ENCODE measurements at regions of chr16 and their contacts with region 1.

Region 1: DNA sequence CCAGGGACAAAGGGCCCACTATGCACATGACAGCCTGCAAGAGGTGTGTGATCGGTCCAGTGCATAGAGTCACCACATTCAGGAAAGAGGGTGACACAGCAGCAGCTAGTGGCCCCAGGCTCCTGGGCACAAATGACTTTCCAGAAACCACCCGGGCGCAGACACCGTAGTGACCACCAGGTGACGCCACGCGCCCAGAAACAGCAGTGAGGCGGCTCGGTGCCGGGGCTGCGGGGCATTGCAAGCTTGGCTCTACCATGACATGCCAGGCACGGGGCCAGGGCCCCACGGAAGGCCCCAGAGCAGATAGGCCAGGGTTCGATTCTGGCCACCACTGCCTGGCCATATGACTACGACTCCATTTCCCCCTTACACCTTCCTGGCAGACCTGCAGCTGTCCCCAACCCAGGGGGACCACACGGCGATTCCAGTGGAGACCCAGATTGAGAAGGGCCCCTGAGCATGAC is 6.7 kb downstream of the RHBDF1 start:
- DNase-seq: peak; percentile 90
- H3K4me3 Mint-ChIP-seq: no peak overlapping the region
- H3K27ac Mint-ChIP-seq: no peak overlapping the region
- H3K4me1 Mint-ChIP-seq: no peaks in the 10 kb centered on the region
- H3K27me3 Mint-ChIP-seq: peaks cover 54% of the 10 kb centered on the region

Region 2: DNA sequence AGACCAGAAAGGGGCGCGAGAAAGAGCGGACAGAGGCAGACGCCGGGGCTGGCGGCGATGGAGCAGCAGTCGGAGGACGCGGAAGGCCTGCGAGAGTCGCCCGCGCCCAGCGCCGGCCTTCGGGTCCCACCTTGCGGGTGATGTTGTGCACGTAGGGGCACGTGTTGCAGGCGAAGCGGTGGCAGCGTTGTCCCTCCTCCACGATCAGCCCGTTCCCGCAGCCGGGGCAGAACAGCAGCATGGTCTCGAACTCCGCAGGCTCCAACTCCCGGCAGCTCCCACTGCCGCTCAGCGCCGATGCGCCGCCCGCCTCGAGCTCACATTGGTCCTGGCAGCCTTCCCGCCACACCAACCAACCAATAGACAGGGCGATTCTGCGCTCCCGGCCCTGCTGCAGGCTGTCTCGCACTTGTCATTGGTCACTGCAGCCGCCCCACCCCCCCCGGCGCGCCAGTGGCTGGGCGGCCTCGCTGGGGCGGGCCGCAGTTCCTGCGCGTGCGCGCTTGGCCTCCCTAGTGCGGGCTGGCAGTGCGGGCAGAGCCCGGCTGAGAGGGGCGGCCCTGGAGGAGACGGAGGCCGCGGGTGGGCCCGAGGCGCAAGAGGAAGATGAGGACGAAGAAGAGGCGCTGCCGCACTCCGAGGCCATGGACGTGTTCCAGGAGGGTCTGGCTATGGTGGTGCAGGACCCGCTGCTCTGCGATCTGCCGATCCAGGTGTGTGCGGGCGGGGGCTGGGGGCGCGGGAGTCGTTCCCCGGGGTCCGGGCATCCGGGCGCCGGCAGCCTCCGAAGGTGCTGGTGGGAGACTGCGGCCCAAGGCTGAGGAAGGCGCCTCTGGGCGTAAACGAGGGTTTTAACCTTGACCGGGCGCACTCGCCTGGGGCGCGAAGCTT is 12.1 kb before region 1 on chr16 and contains the starts of genes POLR3K and SNRNP25:
- CTCF ChIA-PET with region 1: interaction called, 11 read pairs
- DNase-seq: peak; percentile 99
- H3K4me3 Mint-ChIP-seq: peak within 1 kb of the TSS; percentile 92
- H3K27ac Mint-ChIP-seq: peak within 1 kb of the TSS; percentile 88
- H3K4me1 Mint-ChIP-seq: peaks cover 38% of the 10 kb centered on the region
- H3K27me3 Mint-ChIP-seq: no peaks in the 10 kb centered on the region

Region 3: GRCh38 chr16:77807-78443 is 12.2 kb after region 1 on chr16 and contains the start of gene MPG:
- CTCF ChIA-PET with region 1: interaction called, 31 read pairs
- DNase-seq: peak; percentile 89
- H3K4me3 Mint-ChIP-seq: peak within 1 kb of the TSS; percentile 85
- H3K27ac Mint-ChIP-seq: peak within 1 kb of the TSS; percentile 70
- H3K4me1 Mint-ChIP-seq: peaks cover 34% of the 10 kb centered on the region
- H3K27me3 Mint-ChIP-seq: peaks cover 41% of the 10 kb centered on the region

Region 4: DNA sequence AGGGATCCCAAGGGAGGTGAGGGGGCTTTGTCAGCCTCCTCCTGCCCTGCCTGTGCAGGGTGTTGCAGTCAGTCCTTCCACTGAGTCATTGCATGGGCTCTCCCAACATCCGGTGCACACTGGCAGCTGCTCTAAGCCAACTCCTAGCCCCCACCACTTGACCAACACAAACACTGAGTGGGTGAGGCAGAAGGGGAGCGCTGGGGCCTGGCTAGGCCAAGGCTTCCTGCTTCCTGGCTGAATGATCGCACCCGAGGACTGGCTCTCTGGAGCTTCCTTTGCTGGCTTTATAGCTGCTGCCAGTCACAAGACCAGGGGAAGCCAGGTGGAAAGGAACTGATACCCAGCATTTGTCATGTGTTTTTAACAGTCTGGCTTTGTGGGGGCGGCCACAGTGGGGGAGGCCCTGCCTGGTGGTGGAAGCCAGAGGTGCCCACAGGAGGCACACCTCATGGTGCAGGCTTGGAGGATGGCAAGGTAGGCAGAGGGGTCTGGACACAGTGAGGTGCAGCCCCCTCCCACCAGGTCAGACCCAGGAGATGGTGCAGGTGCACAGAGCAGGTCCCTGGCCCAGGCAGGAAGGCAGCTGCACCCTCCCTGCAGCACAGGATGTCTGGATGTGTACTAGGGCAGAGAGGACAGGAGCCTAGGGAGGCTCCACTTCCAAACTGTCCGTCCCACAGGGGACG is 19.2 kb after region 1 on chr16:
- CTCF ChIA-PET with region 1: interaction called, 467 read pairs
- DNase-seq: peak; percentile 62
- H3K4me3 Mint-ChIP-seq: no peak overlapping the region
- H3K27ac Mint-ChIP-seq: peak overlapping the region; percentile 61
- H3K4me1 Mint-ChIP-seq: peaks cover 30% of the 10 kb centered on the region
- H3K27me3 Mint-ChIP-seq: no peaks in the 10 kb centered on the region

Region 5: DNA sequence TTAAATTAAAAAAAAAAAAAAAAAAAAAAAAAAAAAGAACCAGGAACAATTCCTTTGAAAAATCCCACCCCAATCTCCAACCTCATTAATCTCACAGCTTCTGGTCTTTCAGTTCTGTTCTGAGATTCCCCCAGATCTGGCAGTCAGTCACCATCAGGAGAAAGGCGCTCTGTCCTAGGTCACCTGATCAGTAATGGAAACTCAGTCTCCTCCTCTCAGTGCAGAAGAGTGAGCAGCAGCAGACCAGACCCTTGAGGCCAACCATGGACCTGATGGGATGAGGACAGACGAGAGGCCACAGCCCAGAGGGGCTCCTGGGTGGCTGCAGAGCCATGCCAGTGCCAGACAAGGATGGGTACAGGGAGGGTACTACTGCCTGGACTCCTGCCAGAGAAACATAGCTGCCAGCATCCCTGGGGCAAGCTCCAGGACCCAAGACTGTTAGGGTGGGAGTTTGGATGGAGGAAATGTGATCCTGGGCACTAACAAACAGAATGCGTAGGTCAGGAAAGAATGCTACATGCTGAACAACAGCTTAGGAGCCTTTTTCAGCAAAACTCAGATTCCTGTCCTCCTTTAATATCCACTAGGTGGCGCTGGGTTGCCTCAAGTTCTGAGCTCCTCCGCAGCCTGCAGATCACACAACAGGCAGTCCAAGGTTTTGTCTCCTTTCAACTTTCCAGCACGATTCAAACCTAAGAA is 41.1 kb after region 1 on chr16:
- CTCF ChIA-PET with region 1: interaction called, 467 read pairs
- DNase-seq: peak; percentile 68
- H3K4me3 Mint-ChIP-seq: no peak overlapping the region
- H3K27ac Mint-ChIP-seq: no peak overlapping the region
- H3K4me1 Mint-ChIP-seq: no peaks in the 10 kb centered on the region
- H3K27me3 Mint-ChIP-seq: no peaks in the 10 kb centered on the region

Region 6: GRCh38 chr16:117379-118365 is 52.0 kb after region 1 on chr16:
- CTCF ChIA-PET with region 1: interaction called, 11 read pairs
- DNase-seq: peak; percentile 79
- H3K4me3 Mint-ChIP-seq: no peak overlapping the region
- H3K27ac Mint-ChIP-seq: no peak overlapping the region
- H3K4me1 Mint-ChIP-seq: peaks cover 10% of the 10 kb centered on the region
- H3K27me3 Mint-ChIP-seq: no peaks in the 10 kb centered on the region

Region 7: DNA sequence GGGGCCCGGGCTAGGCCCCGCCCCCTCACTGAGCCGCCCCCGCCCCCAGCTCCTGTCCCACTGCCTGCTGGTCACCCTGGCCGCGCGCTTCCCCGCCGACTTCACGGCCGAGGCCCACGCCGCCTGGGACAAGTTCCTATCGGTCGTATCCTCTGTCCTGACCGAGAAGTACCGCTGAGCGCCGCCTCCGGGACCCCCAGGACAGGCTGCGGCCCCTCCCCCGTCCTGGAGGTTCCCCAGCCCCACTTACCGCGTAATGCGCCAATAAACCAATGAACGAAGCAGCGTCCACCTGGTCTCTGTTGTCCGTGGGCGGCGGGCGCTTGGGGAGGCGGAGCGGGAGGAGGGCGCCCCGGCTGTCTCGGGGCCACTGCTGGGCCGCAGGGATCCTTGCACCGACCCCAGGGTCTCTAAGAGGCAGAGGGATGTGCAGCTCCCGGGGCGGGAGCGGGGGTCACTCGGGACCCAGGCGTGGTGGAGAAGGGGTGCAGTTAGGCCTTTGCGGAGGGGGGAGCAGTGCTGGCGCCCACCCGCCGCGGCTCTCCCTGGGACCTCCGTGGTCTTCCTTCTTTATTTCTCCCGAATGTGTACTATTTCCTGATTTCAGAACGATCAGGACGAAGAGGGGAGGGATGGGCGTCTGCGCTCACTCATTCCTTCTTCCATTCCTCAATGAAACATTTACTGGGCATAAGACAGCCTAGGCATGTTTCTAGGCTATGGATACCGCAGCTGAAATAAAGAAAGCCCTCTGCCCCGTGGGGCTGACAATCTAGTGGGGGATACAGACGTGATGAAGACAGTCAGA is 88.7 kb after region 1 on chr16:
- CTCF ChIA-PET with region 1: no interaction called
- DNase-seq: peak; percentile 36
- H3K4me3 Mint-ChIP-seq: peak overlapping the region; percentile 53
- H3K27ac Mint-ChIP-seq: no peak overlapping the region
- H3K4me1 Mint-ChIP-seq: peaks cover 11% of the 10 kb centered on the region
- H3K27me3 Mint-ChIP-seq: peaks cover 71% of the 10 kb centered on the region

Region 8: DNA sequence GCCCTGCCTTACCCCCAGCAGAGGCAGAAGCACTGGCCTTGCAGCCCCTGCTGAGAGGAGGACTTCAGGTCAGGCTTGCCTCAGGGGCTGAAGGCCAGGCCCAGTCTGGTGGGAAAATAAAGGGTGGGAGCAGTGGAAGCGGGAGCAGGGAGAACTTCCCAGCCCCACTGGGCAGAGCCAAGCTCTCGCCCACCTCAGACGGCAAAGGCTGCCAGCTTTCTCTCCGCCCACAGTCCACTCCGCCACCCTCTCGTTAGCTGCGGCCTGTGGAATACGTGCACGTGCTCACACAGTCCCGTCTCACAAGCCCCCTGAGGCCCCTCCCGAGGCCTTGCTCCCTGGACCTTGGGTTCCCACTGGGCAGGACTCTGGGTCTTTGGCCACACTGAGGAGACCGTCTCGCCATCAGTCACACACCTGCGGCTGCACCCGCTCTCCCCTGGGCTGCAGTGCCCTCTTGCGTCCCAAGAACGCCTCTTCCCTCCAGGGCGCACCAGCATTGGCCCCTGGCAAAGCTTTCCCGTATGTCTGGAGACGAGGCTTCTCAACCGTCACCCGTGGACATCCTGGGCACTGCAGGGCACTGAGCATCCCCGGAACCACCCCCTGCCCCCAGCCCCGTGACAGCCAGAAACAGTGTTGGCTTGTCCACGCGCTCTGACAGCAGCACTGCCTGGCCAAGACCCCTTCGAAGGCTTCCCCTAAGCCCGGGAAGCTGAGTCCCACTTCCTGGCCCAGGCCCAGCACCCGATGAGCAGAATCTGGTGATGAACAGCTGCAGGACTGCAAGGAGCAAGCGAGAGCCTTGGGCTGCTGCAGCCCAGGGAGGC is 296.4 kb after region 1 on chr16:
- CTCF ChIA-PET with region 1: interaction called, 12 read pairs
- DNase-seq: peak; percentile 87
- H3K4me3 Mint-ChIP-seq: peak overlapping the region; percentile 26
- H3K27ac Mint-ChIP-seq: no peak overlapping the region
- H3K4me1 Mint-ChIP-seq: peaks cover 6% of the 10 kb centered on the region
- H3K27me3 Mint-ChIP-seq: peaks cover 18% of the 10 kb centered on the region